GM18951 (cell line): ENCODE measurements at regions of chr12 and their contacts with region 1.

Region 1: GRCh38 chr12:58774731-58775130 is 145.6 kb downstream of the LRIG3 start:
- POLR2A ChIP-seq: no peak

Region 2: GRCh38 chr12:58465418-58465817 is 309.3 kb before region 1 on chr12:
- in situ Hi-C with region 1: loop called (anchors 10 kb)
- POLR2A ChIP-seq: no peak